BJ (cell line): ENCODE measurements at regions of chr11 and their contacts with region 1.

Region 1: GRCh38 chr11:36421546-36422155 is 88.4 kb downstream of the TRAF6 start:
- DNase-seq: no peak
- H3K4me3 ChIP-seq: no peak overlapping the region
- H3K27me3 ChIP-seq: no peaks in the 10 kb centered on the region
- CTCF ChIP-seq: no peak

Region 2: DNA sequence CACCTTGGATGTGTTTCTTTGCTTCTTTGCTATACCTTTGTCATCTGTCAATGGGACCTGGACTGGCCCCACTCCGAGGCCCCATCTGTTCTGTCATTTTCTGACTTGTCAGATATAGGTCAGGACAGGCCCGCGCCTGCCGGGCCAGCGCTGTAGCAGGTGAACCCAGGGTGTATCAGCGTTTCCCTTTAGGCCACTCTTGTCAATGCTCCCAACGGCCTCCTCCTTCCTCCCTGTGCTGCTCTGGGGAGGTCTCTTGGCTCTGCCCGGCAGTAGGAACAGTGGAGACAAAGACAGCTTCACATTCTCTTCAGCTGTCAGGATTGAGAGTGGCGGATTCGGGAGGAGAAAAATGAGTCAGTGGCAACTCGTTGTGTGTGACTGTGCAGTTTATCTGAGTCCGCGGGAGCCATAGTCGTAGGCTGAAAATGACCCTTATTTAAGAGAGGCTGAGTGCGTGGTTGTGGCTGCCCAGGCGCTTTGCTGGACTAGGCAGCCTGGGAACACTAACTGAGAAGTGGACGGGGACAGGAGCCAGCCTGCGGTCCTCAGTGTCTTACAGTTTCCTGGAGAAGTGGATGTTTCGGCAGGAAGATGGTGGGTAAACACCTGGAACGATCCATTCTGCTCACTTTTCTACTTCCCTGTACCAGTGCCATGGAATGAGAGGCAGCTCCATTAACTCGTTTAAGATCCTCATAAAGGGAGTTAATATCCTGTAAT is 23.3 kb before region 1 on chr11:
- CTCF ChIA-PET with region 1: no interaction called
- POLR2A ChIA-PET with region 1: interaction called, 26 read pairs
- DNase-seq: no peak
- H3K4me3 ChIP-seq: no peak overlapping the region
- H3K27me3 ChIP-seq: no peaks in the 10 kb centered on the region
- CTCF ChIP-seq: no peak